ENCODE measurements at regions of chr2 and their contacts with region 1.

Region 1: GRCh38 chr2:7607441-7608173 is 690.4 kb downstream of the RNF144A start:
- DNase-seq: no peak
- H3K4me3 Mint-ChIP-seq: no peak overlapping the region
- H3K27ac Mint-ChIP-seq: no peak overlapping the region
- H3K4me1 Mint-ChIP-seq: peaks cover 32% of the 10 kb centered on the region
- H3K27me3 Mint-ChIP-seq: no peaks in the 10 kb centered on the region

Region 2: GRCh38 chr2:7595206-7595605 is 12.4 kb before region 1 on chr2:
- CTCF ChIA-PET with region 1: interaction called, 10 read pairs
- POLR2A ChIA-PET with region 1: no interaction called
- DNase-seq: no peak
- H3K4me3 Mint-ChIP-seq: no peak overlapping the region
- H3K27ac Mint-ChIP-seq: no peak overlapping the region
- H3K4me1 Mint-ChIP-seq: peaks cover 15% of the 10 kb centered on the region
- H3K27me3 Mint-ChIP-seq: no peaks in the 10 kb centered on the region

Measured in activated CD4-positive, alpha-beta T cell treated with anti-CD3 and anti-CD28 coated beads, Interleukin-2, amount 10 ng/mL, durations not matched to agents 7 days and 5 days (primary cell).